ENCODE measurements at regions of chr14 and their contacts with region 1.

Region 1: GRCh38 chr14:50109342-50109741 is 7.0 kb downstream of the VCPKMT start:
- DNase-seq: no peak

Region 2: GRCh38 chr14:49862089-49862673 is 247.2 kb before region 1 on chr14:
- intact Hi-C with region 1: loop called in 1 of 2 experiments (anchors 5 kb)
- DNase-seq: peak; percentile 94

Region 3: DNA sequence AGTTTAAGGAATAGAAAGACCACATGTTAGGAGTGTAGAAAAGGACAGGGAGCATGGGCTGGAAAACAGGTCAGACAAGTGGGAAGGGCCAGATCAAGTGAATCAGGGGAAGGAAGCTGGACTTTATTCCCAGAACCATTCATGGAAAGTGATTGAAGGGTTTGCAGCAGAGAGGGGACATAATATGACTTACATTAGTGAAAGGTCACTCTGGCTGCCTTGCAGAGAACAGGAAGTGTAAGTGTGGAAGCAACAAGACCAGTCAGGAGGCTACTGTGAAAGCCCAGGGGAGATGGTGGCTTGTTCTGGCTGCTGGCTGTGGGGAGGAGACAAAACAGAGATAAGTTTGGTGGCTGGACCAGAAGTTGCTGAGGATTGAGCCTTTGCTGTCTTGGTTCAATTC is 62.1 kb before region 1 on chr14:
- intact Hi-C with region 1: no loop called
- DNase-seq: no peak

Measured in posterior vena cava (tissue), 2 donors.